ENCODE measurements at regions of chr1 and their contacts with region 1.

Region 1: DNA sequence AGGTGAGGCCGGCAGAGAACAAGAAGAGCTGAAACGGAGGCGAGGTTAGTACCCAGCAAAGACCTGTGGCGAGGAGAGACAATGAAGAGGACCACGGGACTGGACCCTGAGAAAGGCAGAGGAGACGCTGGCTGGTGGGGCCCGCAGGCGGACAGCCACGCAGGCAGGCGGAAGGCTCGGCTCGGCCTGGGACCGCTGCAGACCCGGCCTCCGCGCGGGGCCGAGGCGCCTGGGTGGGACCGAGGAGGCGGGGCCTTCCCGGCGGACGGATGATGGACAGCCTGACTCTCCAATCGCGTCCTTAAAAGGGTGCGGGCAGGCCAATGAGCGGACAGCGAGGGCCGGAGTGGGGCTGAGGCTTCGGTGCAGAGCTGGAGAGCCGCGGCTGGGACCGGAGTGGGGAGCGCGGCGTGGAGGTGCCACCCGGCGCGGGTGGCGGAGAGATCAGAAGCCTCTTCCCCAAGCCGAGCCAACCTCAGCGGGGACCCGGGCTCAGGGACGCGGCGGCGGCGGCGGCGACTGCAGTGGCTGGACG is at the start of gene MPZL1:
- DNase-seq: peak; percentile 85
- ATAC-seq: peak; percentile 98
- H3K4me3 ChIP-seq: peak within 1 kb of the TSS; percentile 92 to 95 (median 92)
- H3K27ac ChIP-seq: peak within 1 kb of the TSS; percentile 76
- H3K4me1 ChIP-seq: peaks cover 76% of the 10 kb centered on the region
- H3K27me3 ChIP-seq: no peaks in the 10 kb centered on the region
- CTCF ChIP-seq: no peak
- EP300 ChIP-seq: no peak
- POLR2A ChIP-seq: peak; percentile 47 to 73; a peak in 3 of 4 replicates
- RAD21 ChIP-seq: no peak; the same call in 1 of the 2 replicates
- total RNA-seq, gene MPZL1: 43.9 and 68.7 TPM in 2 replicates

Region 2: GRCh38 chr1:167617153-167618147 is 104.2 kb before region 1 on chr1:
- CTCF ChIA-PET with region 1: no interaction called
- POLR2A ChIA-PET with region 1: no interaction called
- in situ Hi-C with region 1: no loop called
- intact Hi-C with region 1: no loop called
- DNase-seq: no peak
- ATAC-seq: no peak
- H3K4me3 ChIP-seq: no peak overlapping the region
- H3K27ac ChIP-seq: no peak overlapping the region
- H3K4me1 ChIP-seq: no peaks in the 10 kb centered on the region
- H3K27me3 ChIP-seq: peaks cover 0 to 3% of the 10 kb centered on the region in 2 experiments; a peak in 1 of 5 replicates
- CTCF ChIP-seq: no peak
- EP300 ChIP-seq: no peak
- POLR2A ChIP-seq: no peak
- RAD21 ChIP-seq: no peak

Region 3: GRCh38 chr1:167756730-167757405 is 35.2 kb after region 1 on chr1:
- CTCF ChIA-PET with region 1: no interaction called
- POLR2A ChIA-PET with region 1: no interaction called
- in situ Hi-C with region 1: no loop called
- intact Hi-C with region 1: loop called (anchors 5 kb)
- DNase-seq: no peak
- ATAC-seq: no peak
- H3K4me3 ChIP-seq: no peak overlapping the region
- H3K27ac ChIP-seq: no peak overlapping the region
- H3K4me1 ChIP-seq: peaks cover 33% of the 10 kb centered on the region
- H3K27me3 ChIP-seq: no peaks in the 10 kb centered on the region
- CTCF ChIP-seq: no peak
- EP300 ChIP-seq: no peak
- POLR2A ChIP-seq: no peak
- RAD21 ChIP-seq: no peak

Region 4: DNA sequence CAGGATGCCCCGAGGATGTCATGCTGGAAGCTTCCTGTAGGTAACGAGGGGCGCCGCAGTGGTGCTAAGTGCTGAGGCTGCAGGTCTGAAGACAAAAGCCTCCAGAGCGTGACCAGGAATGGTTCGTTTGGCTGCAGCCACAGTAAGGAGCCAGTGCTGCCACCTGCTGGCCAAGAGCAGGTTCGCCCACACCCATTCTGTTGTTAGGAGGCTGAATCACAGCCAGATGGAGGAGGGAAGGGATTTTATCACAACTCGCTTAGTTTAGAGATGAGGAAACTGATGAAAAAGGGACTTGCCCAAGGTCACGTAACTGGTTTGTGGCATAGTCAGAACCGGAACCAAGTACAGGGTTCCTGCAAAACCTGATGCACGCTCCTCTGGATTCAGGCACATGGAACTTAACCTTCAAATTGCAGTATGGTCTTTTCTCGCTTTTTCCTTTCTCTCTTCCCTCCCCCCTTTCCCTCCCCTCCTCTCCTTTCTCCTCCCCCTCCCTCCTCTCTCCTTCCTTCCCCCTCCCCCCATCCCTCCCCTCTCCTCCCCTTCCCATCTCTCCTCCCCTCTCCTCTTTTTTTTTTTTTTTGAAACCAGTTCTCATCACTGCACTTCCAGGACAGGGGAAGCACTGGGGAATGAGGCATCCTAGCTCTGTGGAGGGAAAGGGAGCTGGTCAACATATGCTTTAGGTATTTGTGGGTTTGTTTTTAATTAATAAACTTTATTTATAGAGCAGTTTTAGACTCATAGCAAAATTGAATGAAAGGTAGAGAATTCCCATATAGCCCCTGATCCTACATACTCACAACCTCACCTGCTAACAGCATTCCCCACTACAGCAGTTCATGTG is 81.9 kb after region 1 on chr1:
- CTCF ChIA-PET with region 1: interaction called, 15 read pairs
- POLR2A ChIA-PET with region 1: no interaction called
- in situ Hi-C with region 1: loop called (anchors 5 kb)
- intact Hi-C with region 1: loop called (anchors 1 kb)
- DNase-seq: peak; percentile 90
- ATAC-seq: peak; percentile 94
- H3K4me3 ChIP-seq: peak overlapping the region in 1 of 3 experiments; percentile 21; a peak in 1 of 6 replicates
- H3K27ac ChIP-seq: no peak overlapping the region
- H3K4me1 ChIP-seq: peaks cover 29% of the 10 kb centered on the region
- H3K27me3 ChIP-seq: no peaks in the 10 kb centered on the region
- CTCF ChIP-seq: peak; percentile 96
- EP300 ChIP-seq: no peak
- POLR2A ChIP-seq: no peak
- RAD21 ChIP-seq: peak; percentile 88

Measured in HepG2 (cell line).